H1 (cell line): ENCODE measurements at regions of chr17 and their contacts with region 1.

Region 1: DNA sequence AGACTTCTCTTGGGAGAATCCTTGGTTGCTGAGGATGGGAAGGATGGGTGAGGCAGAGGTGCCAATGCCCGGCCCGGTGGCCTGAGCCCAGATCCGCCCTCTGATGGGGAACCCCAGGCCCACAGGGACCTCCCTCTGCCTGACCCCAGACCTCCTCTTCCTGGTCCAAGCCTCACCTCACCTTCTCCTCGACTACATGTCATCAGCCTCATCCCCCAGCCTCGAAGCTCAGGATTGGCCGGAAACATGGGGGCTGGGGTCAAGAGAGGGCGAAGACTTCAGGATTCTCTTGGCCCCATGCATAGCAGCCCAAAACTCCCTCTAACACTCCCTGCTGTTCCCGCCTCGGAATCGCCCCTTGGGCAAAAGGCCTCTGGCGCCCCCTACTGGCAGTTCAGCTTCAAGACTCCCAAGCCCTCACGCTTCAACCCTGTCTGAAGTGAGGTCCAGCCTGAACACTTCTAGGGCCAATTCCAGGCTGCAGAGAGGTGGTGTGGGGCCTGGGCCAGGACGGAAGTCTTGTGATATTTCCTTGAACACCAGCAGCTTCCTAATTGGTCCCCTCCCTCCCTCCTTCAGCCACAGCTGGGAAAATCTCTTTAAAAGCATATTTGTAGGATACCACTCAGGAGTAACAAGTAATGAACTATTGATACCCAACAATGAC is 47.2 kb downstream of the ARHGAP27 start:
- DNase-seq: peak; percentile 80 to 99
- H3K4me3 ChIP-seq: no peak overlapping the region
- H3K27ac ChIP-seq: no peak overlapping the region
- H3K4me1 ChIP-seq: peaks cover 0 to 13% (median 8%) of the 10 kb centered on the region in 4 experiments; a peak in 3 of 7 replicates
- H3K27me3 ChIP-seq: 0 out of 7 replicates have a peak, but pooled peaks cover 0 to 3% (median 0%) of the 10 kb centered on the region in 4 experiments
- CTCF ChIP-seq: peak; percentile 90 to 98 (median 98)
- EP300 ChIP-seq: no peak
- POLR2A ChIP-seq: no peak
- RAD21 ChIP-seq: peak; percentile 99

Region 2: DNA sequence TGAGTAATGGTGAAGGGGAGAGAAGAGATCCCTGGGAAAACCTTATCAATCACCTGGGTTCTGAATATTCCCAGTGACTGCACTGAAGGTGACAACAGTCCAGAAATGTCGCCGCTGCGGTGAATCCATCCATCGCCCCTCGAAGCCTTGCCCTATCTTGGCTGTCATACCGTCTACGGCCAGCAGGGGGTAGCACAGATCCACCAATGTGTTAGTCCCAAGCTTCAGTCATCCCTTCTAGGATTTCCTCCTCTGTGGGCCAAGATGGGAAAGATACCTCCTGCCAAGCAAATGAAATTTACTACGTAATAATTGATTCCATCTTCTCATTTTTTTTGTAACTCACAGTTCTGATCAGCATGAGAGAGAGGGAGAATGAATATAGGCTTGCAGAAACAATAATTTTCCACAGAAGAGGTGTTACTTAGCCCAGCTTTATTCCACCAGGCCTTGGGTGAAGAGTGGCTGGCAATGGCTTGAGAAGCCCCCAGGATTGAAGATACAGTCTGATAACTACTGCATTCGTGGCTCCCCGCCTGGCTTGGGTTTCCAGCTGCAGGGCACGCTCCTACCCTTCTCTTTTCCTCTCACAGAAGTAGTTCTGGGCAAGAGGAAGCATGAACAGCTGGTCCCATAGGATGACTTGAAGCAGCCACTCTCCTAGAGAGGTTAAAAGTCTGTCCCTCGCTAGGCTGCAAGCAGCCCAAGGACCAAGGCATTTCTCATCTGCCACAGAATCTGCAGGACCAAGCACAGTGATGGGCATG is 166.4 kb before region 1 on chr17:
- CTCF ChIA-PET with region 1: interaction called, 20 read pairs
- POLR2A ChIA-PET with region 1: interaction called, 3 read pairs
- DNase-seq: peak in 1 of 2 experiments; percentile 99
- H3K4me3 ChIP-seq: no peak overlapping the region
- H3K27ac ChIP-seq: no peak overlapping the region
- H3K4me1 ChIP-seq: peaks cover 0 to 9% (median 3%) of the 10 kb centered on the region in 4 experiments; a peak in 3 of 7 replicates
- H3K27me3 ChIP-seq: peaks cover 15 to 42% (median 35%) of the 10 kb centered on the region in 4 experiments
- CTCF ChIP-seq: peak; percentile 94 to 97 (median 97)
- EP300 ChIP-seq: no peak
- POLR2A ChIP-seq: no peak
- RAD21 ChIP-seq: peak; percentile 96 to 97

Region 3: GRCh38 chr17:45241328-45242011 is 144.0 kb before region 1 on chr17:
- CTCF ChIA-PET with region 1: interaction called, 16 read pairs
- POLR2A ChIA-PET with region 1: interaction called, 3 read pairs
- DNase-seq: peak in 1 of 2 experiments; percentile 84
- H3K4me3 ChIP-seq: peak overlapping the region; percentile 54 to 73 (median 60)
- H3K27ac ChIP-seq: no peak overlapping the region
- H3K4me1 ChIP-seq: peaks cover 0 to 18% (median 13%) of the 10 kb centered on the region in 4 experiments; a peak in 6 of 7 replicates
- H3K27me3 ChIP-seq: peaks cover 0 to 25% (median 18%) of the 10 kb centered on the region in 4 experiments; a peak in 6 of 7 replicates
- CTCF ChIP-seq: no peak
- EP300 ChIP-seq: no peak
- POLR2A ChIP-seq: no peak
- RAD21 ChIP-seq: no peak

Region 4: DNA sequence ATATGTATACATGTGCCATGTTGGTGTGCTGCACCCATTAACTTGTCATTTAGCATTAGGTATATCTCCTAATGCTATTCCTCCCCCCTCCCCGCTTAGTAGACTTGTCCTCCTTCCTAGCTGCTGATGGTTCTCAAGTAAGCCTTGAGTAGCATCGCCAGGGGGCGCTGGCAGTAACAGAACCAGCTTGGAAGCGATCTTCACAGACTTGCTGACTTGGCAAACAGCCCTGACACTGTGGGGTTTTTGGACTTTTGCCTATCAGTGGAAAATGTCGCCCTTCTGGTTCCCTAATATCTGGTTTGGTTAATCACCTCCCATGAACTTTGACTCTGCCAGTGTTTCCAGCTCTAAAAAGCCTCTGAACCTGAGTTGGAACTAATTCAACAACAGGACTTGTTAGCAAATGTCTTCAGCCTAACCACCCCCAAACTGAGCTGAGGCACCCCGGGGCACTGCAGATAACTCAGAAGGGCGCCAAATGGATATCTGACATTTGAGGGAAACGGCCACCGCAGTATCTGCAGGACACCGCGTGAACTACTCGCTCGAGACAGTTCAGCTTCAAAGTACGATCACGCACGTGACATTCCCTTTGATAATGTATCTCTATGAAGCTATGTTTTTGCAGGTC is 108.1 kb before region 1 on chr17:
- CTCF ChIA-PET with region 1: interaction called, 579 read pairs
- POLR2A ChIA-PET with region 1: interaction called, 7 read pairs
- DNase-seq: peak; percentile 84 to 89
- H3K4me3 ChIP-seq: no peak overlapping the region
- H3K27ac ChIP-seq: no peak overlapping the region
- H3K4me1 ChIP-seq: peaks cover 0 to 4% (median under 1%) of the 10 kb centered on the region in 4 experiments; a peak in 1 of 7 replicates
- H3K27me3 ChIP-seq: no peaks in the 10 kb centered on the region
- CTCF ChIP-seq: peak; percentile 84 to 90 (median 89)
- EP300 ChIP-seq: no peak
- POLR2A ChIP-seq: no peak
- RAD21 ChIP-seq: peak; percentile 77 to 83

Region 5: GRCh38 chr17:45317112-45317928 is 68.1 kb before region 1 on chr17:
- CTCF ChIA-PET with region 1: interaction called, 31 read pairs
- POLR2A ChIA-PET with region 1: interaction called, 3 read pairs
- DNase-seq: peak; percentile 99
- H3K4me3 ChIP-seq: peak overlapping the region; percentile 49 to 84 (median 76)
- H3K27ac ChIP-seq: no peak overlapping the region; the same call in 1 of the 2 replicates
- H3K4me1 ChIP-seq: peaks cover 0 to 5% (median 3%) of the 10 kb centered on the region in 4 experiments; a peak in 6 of 7 replicates
- H3K27me3 ChIP-seq: peaks cover 0 to 2% (median 0%) of the 10 kb centered on the region in 4 experiments; a peak in 3 of 7 replicates
- CTCF ChIP-seq: no peak
- EP300 ChIP-seq: no peak
- POLR2A ChIP-seq: 0 out of 3 replicates have a peak, but pooled peaks of 1 of the 2 experiments have one; percentile 14
- RAD21 ChIP-seq: no peak; a peak in 1 of 4 replicates

Region 6: GRCh38 chr17:45371414-45372327 is 13.8 kb before region 1 on chr17:
- CTCF ChIA-PET with region 1: interaction called, 50 read pairs
- POLR2A ChIA-PET with region 1: interaction called, 4 read pairs
- DNase-seq: peak; percentile 84 to 92
- H3K4me3 ChIP-seq: peak overlapping the region in 3 of 4 experiments; percentile 1 to 44 (median 14); a peak in 5 of 8 replicates
- H3K27ac ChIP-seq: peak overlapping the region; percentile 79
- H3K4me1 ChIP-seq: peaks cover 8 to 28% (median 16%) of the 10 kb centered on the region in 4 experiments
- H3K27me3 ChIP-seq: no peaks in the 10 kb centered on the region
- CTCF ChIP-seq: no peak
- EP300 ChIP-seq: 0 out of 3 replicates have a peak, but pooled peaks of 1 of the 2 experiments have one; percentile 45
- POLR2A ChIP-seq: peak; percentile 50 to 53; a peak in 2 of 3 replicates
- RAD21 ChIP-seq: no peak; a peak in 1 of 4 replicates

Region 7: DNA sequence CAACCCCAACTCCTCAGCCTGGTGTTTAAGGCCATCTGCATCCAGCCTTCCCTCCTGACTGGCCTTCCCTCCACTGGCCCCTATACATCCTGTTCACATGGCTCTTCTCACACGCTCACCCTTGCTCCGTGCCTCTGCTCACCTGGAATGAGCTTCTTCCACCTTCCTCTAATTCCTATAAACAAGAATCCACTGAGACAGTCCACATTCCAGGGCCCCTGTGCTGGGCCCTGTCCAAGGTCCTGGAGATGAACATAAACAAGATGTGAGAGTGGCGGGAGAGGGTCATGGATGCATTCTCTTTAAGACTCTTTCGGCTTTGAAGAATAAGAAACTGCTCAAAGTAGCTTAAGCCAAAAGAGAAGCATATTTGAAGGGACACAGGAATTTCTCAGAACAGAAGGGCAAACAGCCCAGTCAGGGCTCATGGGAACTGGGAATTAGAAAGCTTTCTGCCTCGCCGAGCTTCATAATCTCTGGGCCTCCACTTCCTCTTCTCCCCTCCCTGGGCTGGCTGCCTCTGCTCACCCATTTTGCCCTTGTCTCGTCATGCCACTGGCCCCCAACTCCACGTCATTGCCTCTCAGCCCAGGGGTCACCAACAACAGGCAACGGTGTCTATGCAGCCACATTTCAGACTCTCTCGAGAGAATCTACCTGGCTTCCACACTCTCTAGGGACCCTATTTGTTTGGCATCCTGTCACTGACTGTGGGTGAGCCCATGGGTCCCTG is 472.7 kb after region 1 on chr17:
- CTCF ChIA-PET with region 1: no interaction called
- POLR2A ChIA-PET with region 1: no interaction called
- DNase-seq: peak in 1 of 2 experiments; percentile 70
- H3K4me3 ChIP-seq: no peak overlapping the region
- H3K27ac ChIP-seq: no peak overlapping the region
- H3K4me1 ChIP-seq: no peaks in the 10 kb centered on the region
- H3K27me3 ChIP-seq: no peaks in the 10 kb centered on the region
- CTCF ChIP-seq: no peak
- EP300 ChIP-seq: no peak
- POLR2A ChIP-seq: no peak
- RAD21 ChIP-seq: no peak